PC-3 (cell line): ENCODE measurements at regions of chr9 and their contacts with region 1.

Region 1: GRCh38 chr9:106420511-106420944 is 442.4 kb upstream of the ZNF462 start:
- DNase-seq: peak; percentile 92
- ATAC-seq: peak; percentile 75
- H3K4me3 ChIP-seq: peak overlapping the region; percentile 28; the same call in 1 of the 2 replicates
- H3K27ac ChIP-seq: peak overlapping the region; percentile 95
- H3K4me1 ChIP-seq: peaks cover 31% of the 10 kb centered on the region
- H3K27me3 ChIP-seq: no peaks in the 10 kb centered on the region
- CTCF ChIP-seq: no peak

Region 2: DNA sequence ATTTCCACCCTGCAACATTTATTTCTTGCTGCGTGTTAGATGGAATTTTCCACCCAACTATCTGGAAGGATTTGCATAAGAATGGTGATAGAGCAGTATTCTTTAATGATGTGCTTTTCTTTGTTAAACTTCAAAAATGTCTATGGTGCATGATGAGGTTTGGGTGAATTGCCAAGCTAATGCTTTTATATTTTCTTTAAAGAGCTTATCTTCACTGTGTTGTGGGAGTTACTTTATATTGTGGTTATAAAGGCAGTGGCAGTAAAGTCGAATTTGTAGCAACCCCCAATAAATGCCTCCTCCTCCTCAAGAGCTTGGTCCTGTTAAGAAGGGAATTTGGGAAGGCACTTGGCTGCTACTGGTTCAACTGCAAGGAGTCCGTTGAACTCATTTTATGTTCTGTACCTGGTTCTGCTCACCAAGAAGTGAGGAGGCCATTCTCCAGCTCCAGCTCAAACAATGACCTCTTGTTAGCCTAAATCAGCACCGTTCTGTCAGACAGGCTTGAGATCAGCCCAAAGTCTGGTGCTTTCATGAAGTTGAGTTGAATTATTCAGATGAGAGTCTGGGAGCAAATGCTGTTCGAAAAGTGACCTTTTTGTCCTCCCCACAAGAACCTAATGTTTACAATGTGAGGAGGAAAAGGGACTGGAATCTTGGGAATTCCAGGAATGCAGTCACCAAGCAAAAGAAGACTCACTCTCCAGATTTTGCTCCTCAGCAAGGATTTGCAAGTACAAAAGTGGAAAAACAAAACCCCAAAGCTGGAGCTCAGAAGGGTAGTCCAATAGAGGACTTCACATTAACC is 509.2 kb before region 1 on chr9:
- CTCF ChIA-PET with region 1: no interaction called
- POLR2A ChIA-PET with region 1: no interaction called
- intact Hi-C with region 1: loop called (anchors 5 kb)
- DNase-seq: peak; percentile 65
- ATAC-seq: peak; percentile 21
- H3K4me3 ChIP-seq: peak overlapping the region; percentile 4; the same call in 1 of the 2 replicates
- H3K27ac ChIP-seq: no peak overlapping the region
- H3K4me1 ChIP-seq: peaks cover 40% of the 10 kb centered on the region
- H3K27me3 ChIP-seq: no peaks in the 10 kb centered on the region
- CTCF ChIP-seq: no peak

Region 3: DNA sequence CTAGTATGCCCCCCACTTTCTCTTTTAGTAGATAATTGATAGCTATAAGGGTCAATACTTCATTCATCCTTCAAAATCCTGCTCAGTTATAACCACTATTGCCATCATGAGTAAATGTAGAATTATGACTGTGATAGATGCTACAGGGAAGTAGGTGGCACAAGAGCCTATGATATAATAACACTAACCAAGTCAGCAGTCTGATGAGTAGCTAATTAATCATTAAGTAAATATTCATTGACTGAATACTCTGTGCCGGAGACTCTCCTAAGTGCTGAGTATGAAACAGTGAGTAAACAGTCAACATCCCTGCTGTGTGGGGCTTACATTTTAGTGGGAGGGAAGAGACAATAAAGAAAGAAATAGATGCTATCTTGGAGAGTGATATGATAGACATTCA is 12.1 kb after region 1 on chr9:
- CTCF ChIA-PET with region 1: no interaction called
- POLR2A ChIA-PET with region 1: interaction called, 9 read pairs
- intact Hi-C with region 1: loop called (anchors 1 kb)
- DNase-seq: peak; percentile 78
- ATAC-seq: peak; percentile 98
- H3K4me3 ChIP-seq: no peak overlapping the region
- H3K27ac ChIP-seq: peak overlapping the region; percentile 59
- H3K4me1 ChIP-seq: peaks cover 19% of the 10 kb centered on the region
- H3K27me3 ChIP-seq: no peaks in the 10 kb centered on the region
- CTCF ChIP-seq: no peak; the same call in 1 of the 2 replicates

Region 4: DNA sequence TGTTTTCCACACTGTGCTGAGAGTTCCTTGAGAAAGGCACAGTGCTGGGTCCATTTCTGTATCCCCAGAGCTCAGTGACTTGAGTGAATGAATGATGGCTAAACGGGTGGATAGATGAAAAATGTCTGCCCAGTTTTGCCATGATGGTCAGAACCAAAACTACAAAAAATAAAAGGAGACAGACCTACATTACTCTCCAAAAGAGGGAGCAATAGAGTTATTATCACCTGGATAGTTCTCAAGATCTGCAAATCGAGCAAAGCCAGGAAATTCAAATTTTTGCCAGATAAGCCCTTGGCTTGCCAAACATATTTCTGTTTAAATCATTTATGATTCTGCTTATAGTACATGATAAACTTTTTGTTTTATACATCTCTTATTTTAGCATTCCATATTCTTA is 228.3 kb after region 1 on chr9:
- CTCF ChIA-PET with region 1: no interaction called
- POLR2A ChIA-PET with region 1: no interaction called
- intact Hi-C with region 1: loop called (anchors 10 kb)
- DNase-seq: peak; percentile 59
- ATAC-seq: no peak
- H3K4me3 ChIP-seq: no peak overlapping the region
- H3K27ac ChIP-seq: no peak overlapping the region
- H3K4me1 ChIP-seq: no peaks in the 10 kb centered on the region
- H3K27me3 ChIP-seq: no peaks in the 10 kb centered on the region
- CTCF ChIP-seq: peak; percentile 60